Activated CD8-positive, alpha-beta T cell treated with anti-CD3 and anti-CD28 coated beads for 36 hours (primary cell): ENCODE measurements at regions of chr1 and their contacts with region 1.

Region 1: GRCh38 chr1:94463765-94464330 is 45.7 kb downstream of the ABCD3 start:
- DNase-seq: no peak
- ATAC-seq: peak; percentile 67
- H3K4me3 Mint-ChIP-seq: no peak overlapping the region
- H3K27ac Mint-ChIP-seq: no peak overlapping the region
- H3K4me1 Mint-ChIP-seq: no peaks in the 10 kb centered on the region
- H3K27me3 Mint-ChIP-seq: no peaks in the 10 kb centered on the region
- CTCF ChIP-seq: peak; percentile 49

Region 2: DNA sequence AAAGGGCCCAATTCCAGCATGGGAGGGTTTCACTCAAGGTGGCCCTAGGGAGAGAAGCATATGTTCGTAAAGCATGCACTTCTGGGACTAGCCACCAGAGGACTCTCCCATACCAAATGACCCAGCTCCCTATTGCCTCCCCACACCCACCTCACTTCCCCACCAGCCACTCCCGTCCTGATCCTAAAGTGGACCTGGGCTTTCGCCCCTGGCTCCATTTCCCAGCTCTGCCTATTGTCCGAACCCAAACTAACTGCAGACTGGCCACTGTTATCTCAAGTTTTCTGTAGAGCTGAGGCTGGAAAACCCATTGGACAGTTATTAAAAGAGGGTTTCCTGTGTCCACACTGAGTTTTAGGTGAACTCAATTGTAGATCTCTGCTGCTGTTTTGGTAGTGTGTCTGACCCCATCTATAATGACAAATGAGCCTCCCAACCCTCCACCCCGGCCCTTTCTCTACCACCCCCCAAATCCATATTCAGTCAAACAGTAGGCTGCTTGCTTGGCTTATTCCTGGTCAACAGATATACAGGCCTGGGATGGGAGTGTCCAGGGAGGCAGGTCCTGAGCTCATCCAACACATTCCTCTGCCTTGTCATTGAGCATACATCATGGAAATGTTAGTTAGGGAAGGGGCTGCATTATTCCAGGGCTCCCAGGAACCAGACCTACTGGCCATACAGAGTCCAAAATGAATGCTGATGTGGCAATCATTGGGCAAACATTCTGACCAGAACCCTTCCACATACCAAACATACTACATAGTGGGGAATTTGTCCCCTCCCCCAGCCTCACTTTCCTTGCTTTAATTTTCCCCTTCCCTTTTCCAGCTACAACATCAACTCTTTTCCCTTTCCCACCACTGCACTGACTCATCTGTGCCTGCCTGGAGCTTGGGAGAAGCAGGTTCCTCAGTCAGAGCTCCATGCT is 402.1 kb before region 1 on chr1:
- CTCF ChIA-PET with region 1: interaction called, 22 read pairs
- POLR2A ChIA-PET with region 1: no interaction called
- intact Hi-C with region 1: no loop called
- DNase-seq: peak; percentile 67
- ATAC-seq: peak; percentile 85
- H3K4me3 Mint-ChIP-seq: no peak overlapping the region
- H3K27ac Mint-ChIP-seq: no peak overlapping the region
- H3K4me1 Mint-ChIP-seq: no peaks in the 10 kb centered on the region
- H3K27me3 Mint-ChIP-seq: peaks cover 4% of the 10 kb centered on the region
- CTCF ChIP-seq: peak; percentile 85

Region 3: GRCh38 chr1:94335950-94336349 is 127.9 kb before region 1 on chr1:
- CTCF ChIA-PET with region 1: interaction called, 14 read pairs
- POLR2A ChIA-PET with region 1: no interaction called
- intact Hi-C with region 1: no loop called
- DNase-seq: peak; percentile 51
- ATAC-seq: no peak
- H3K4me3 Mint-ChIP-seq: no peak overlapping the region
- H3K27ac Mint-ChIP-seq: no peak overlapping the region
- H3K4me1 Mint-ChIP-seq: no peaks in the 10 kb centered on the region
- H3K27me3 Mint-ChIP-seq: peaks cover 8% of the 10 kb centered on the region
- CTCF ChIP-seq: peak; percentile 69

Region 4: GRCh38 chr1:94481473-94481933 is 17.7 kb after region 1 on chr1:
- CTCF ChIA-PET with region 1: interaction called, 31 read pairs
- POLR2A ChIA-PET with region 1: no interaction called
- intact Hi-C with region 1: no loop called
- DNase-seq: peak; percentile 37
- ATAC-seq: peak; percentile 84
- H3K4me3 Mint-ChIP-seq: no peak overlapping the region
- H3K27ac Mint-ChIP-seq: no peak overlapping the region
- H3K4me1 Mint-ChIP-seq: no peaks in the 10 kb centered on the region
- H3K27me3 Mint-ChIP-seq: no peaks in the 10 kb centered on the region
- CTCF ChIP-seq: peak; percentile 75

Region 5: DNA sequence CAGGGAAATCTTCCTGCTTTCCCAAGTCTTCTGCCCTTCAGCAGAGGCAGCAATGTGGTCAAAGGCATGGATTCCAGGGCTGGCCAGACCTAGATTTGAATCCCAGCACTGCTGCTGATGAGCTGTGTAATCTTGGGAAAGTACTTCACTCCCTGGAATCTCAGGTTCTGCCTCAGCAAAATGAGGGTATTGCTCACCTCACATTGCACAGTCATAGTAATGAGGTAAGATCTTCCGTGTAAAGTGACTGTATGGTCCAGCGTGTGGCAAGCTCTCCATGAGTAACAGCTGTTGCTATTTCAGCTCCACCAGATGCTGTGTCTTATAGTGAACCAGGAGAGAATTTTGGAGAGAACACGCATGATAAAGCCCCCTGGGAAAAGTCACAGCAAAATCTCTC is 133.9 kb after region 1 on chr1:
- CTCF ChIA-PET with region 1: no interaction called
- POLR2A ChIA-PET with region 1: no interaction called
- intact Hi-C with region 1: no loop called
- DNase-seq: no peak
- ATAC-seq: no peak
- H3K4me3 Mint-ChIP-seq: no peak overlapping the region
- H3K27ac Mint-ChIP-seq: no peak overlapping the region
- H3K4me1 Mint-ChIP-seq: peaks cover 4% of the 10 kb centered on the region
- H3K27me3 Mint-ChIP-seq: peaks cover 10% of the 10 kb centered on the region
- CTCF ChIP-seq: no peak